HCT116 (cell line): ENCODE measurements at regions of chr14 and their contacts with region 1.

Region 1: GRCh38 chr14:53124786-53125185 is 28.3 kb downstream of the DDHD1 start:
- DNase-seq: no peak
- ATAC-seq: no peak
- H3K4me3 ChIP-seq: no peak overlapping the region
- H3K27ac ChIP-seq: no peak overlapping the region
- H3K4me1 ChIP-seq: peaks cover 7 to 8% of the 10 kb centered on the region in 2 experiments
- H3K27me3 ChIP-seq: no peaks in the 10 kb centered on the region
- CTCF ChIP-seq: no peak
- POLR2A ChIP-seq: no peak
- RAD21 ChIP-seq: no peak

Region 2: DNA sequence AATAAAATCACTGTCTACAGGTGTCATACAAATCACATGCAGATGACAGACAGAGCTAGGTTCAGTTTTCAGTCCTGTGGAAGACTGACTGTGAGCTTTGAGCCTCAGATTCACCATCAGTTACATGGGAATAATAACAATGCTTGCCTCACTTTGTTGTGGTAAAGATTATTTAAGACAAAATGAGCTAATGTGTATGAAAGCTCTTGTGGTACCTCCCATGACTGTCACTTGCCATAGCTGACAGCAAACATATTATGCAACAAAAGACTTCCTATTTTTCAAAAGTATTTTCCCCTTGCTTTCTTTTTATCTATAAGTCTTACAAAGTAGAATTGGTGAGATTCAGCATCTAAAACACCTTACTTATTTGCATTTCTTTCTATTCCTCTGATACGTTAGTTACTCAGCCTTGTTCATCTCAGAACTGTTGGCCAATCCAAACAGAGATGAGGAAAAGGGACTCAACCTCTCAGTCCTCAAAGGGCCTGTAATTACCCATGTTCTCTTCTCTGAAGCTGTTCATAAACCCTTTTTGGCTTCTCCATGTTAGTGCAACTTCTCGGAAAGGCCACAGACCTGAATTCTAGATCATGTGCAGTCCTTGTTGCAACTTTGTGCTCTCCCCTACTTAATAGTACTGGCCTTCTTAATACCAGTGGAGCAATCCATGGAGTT is 37.1 kb after region 1 on chr14:
- CTCF ChIA-PET with region 1: no interaction called
- POLR2A ChIA-PET with region 1: no interaction called
- RAD21 ChIA-PET with region 1: no interaction called
- intact Hi-C with region 1: loop called (anchors 1 kb)
- DNase-seq: no peak
- ATAC-seq: no peak
- H3K4me3 ChIP-seq: no peak overlapping the region
- H3K27ac ChIP-seq: no peak overlapping the region
- H3K4me1 ChIP-seq: no peaks in the 10 kb centered on the region
- H3K27me3 ChIP-seq: no peaks in the 10 kb centered on the region
- CTCF ChIP-seq: no peak
- POLR2A ChIP-seq: no peak
- RAD21 ChIP-seq: no peak